CD4-positive, alpha-beta T cell (primary cell): ENCODE measurements at regions of chr5 and their contacts with region 1.

Region 1: DNA sequence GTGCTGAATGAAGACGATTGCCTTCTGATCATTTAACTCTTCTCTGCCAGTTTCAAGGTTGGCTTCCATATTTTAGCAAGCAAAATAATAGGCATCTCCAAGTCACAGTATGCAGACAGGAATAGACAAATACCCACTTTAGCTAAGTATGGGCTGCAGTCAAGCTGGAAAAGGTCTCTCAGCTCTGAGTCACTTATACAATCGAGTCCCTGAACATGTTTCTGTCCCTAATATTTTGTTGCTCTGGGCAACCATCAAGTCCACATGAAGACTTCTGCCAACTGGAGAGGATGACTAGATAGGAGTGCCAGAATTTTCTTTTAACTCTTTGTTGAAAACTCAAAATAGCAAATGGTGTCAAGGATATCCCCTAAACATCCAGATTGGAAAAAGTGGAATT is 575.3 kb downstream of the RAB3C start:
- DNase-seq: no peak
- ATAC-seq: no peak
- H3K4me3 ChIP-seq: no peak overlapping the region
- H3K4me3 Mint-ChIP-seq: no peak overlapping the region
- H3K27ac ChIP-seq: no peak overlapping the region
- H3K27ac Mint-ChIP-seq: no peak overlapping the region
- H3K4me1 ChIP-seq: peaks cover under 1% of the 10 kb centered on the region
- H3K4me1 Mint-ChIP-seq: peaks cover 15% of the 10 kb centered on the region
- H3K27me3 ChIP-seq: no peaks in the 10 kb centered on the region
- H3K27me3 Mint-ChIP-seq: no peaks in the 10 kb centered on the region
- CTCF ChIP-seq: no peak

Region 2: DNA sequence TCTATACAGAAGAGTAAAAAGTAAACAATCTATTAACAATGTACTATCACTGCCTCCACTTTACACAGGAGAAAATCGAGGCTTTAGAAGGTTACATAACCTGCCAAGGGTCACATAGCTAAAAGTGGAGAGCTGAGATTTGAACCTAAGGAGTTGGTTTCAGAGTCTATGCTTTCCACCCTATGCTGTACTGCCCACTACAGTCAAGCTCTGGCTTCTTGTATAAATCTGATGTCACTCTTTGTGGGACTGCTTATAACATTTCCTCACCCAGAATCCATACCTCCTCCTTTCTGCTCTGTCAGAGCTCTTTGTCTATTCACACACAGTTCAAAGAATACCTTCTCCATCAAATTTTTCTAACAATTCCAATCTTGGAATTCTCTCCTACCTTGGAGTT is 72.1 kb before region 1 on chr5:
- CTCF ChIA-PET with region 1: no interaction called
- POLR2A ChIA-PET with region 1: no interaction called
- intact Hi-C with region 1: loop called in 1 of 2 experiments (anchors 5 kb)
- DNase-seq: peak in 2 of 14 experiments; percentile 17 to 19
- ATAC-seq: peak; percentile 41
- H3K4me3 ChIP-seq: no peak overlapping the region
- H3K4me3 Mint-ChIP-seq: no peak overlapping the region
- H3K27ac ChIP-seq: no peak overlapping the region
- H3K27ac Mint-ChIP-seq: no peak overlapping the region
- H3K4me1 ChIP-seq: no peaks in the 10 kb centered on the region
- H3K4me1 Mint-ChIP-seq: no peaks in the 10 kb centered on the region
- H3K27me3 ChIP-seq: no peaks in the 10 kb centered on the region
- H3K27me3 Mint-ChIP-seq: peaks cover 3% of the 10 kb centered on the region
- CTCF ChIP-seq: no peak